T-cell (primary cell): ENCODE measurements at regions of chr2 and their contacts with region 1.

Region 1: DNA sequence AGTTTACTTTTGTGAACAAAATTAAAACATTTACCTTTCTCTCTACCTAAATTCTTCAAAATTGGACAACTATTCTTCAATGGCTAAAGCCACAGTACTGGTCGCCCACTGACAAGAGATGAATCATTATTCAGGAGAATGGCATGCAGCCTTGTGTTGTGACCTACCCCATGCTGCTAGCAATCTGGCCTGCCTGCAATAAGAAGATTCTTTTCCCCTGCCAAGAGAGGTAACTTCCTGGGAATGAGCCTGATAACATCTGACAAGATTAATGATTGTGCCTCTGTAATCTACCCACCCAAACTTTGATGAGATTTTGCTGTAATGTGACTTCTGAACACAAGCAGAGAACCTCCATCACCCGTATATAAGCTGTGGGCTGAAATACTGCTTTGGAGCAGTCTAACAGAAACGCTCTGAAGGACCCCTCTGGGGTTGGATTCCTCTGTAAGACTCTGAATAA is 47.0 kb upstream of the ST3GAL5 start:
- DNase-seq: no peak
- ATAC-seq: no peak
- H3K4me3 ChIP-seq: no peak overlapping the region
- H3K4me3 Mint-ChIP-seq: no peak overlapping the region
- H3K27ac ChIP-seq: no peak overlapping the region
- H3K27ac Mint-ChIP-seq: no peak overlapping the region
- H3K4me1 ChIP-seq: peaks cover 7 to 8% of the 10 kb centered on the region in 2 experiments
- H3K4me1 Mint-ChIP-seq: peaks cover 18 to 19% (median 19%) of the 10 kb centered on the region in 3 donors
- H3K27me3 ChIP-seq: no peaks in the 10 kb centered on the region
- H3K27me3 Mint-ChIP-seq: no peaks in the 10 kb centered on the region

Region 2: GRCh38 chr2:85838181-85838580 is 97.6 kb before region 1 on chr2:
- CTCF ChIA-PET with region 1: no interaction called
- POLR2A ChIA-PET with region 1: interaction called in 1 of 2 experiments, 11 read pairs
- DNase-seq: no peak
- ATAC-seq: no peak
- H3K4me3 ChIP-seq: no peak overlapping the region
- H3K4me3 Mint-ChIP-seq: peak overlapping the region in 1 of 3 donors; percentile 7
- H3K27ac ChIP-seq: no peak overlapping the region
- H3K27ac Mint-ChIP-seq: peak overlapping the region; percentile 40 to 63
- H3K4me1 ChIP-seq: peaks cover 0 to 7% of the 10 kb centered on the region in 2 experiments
- H3K4me1 Mint-ChIP-seq: peaks cover 19 to 22% (median 22%) of the 10 kb centered on the region in 3 donors
- H3K27me3 ChIP-seq: no peaks in the 10 kb centered on the region
- H3K27me3 Mint-ChIP-seq: no peaks in the 10 kb centered on the region

Region 3: GRCh38 chr2:85878719-85879385 is 56.9 kb before region 1 on chr2:
- CTCF ChIA-PET with region 1: no interaction called
- POLR2A ChIA-PET with region 1: no interaction called
- DNase-seq: no peak
- ATAC-seq: peak in 2 of 4 experiments; percentile 51 to 64
- H3K4me3 ChIP-seq: no peak overlapping the region
- H3K4me3 Mint-ChIP-seq: peak overlapping the region in 1 of 3 donors; percentile 64
- H3K27ac ChIP-seq: no peak overlapping the region
- H3K27ac Mint-ChIP-seq: peak overlapping the region; percentile 70 to 75
- H3K4me1 ChIP-seq: peaks cover 19 to 34% of the 10 kb centered on the region in 2 experiments
- H3K4me1 Mint-ChIP-seq: peaks cover 73 to 81% (median 74%) of the 10 kb centered on the region in 3 donors
- H3K27me3 ChIP-seq: no peaks in the 10 kb centered on the region
- H3K27me3 Mint-ChIP-seq: no peaks in the 10 kb centered on the region

Region 4: GRCh38 chr2:85920810-85921545 is 14.8 kb before region 1 on chr2:
- CTCF ChIA-PET with region 1: no interaction called
- POLR2A ChIA-PET with region 1: no interaction called
- DNase-seq: no peak
- ATAC-seq: no peak
- H3K4me3 ChIP-seq: no peak overlapping the region
- H3K4me3 Mint-ChIP-seq: no peak overlapping the region
- H3K27ac ChIP-seq: no peak overlapping the region
- H3K27ac Mint-ChIP-seq: no peak overlapping the region
- H3K4me1 ChIP-seq: no peaks in the 10 kb centered on the region
- H3K4me1 Mint-ChIP-seq: peaks cover 6 to 8% (median 7%) of the 10 kb centered on the region in 3 donors
- H3K27me3 ChIP-seq: peaks cover 0 to 2% of the 10 kb centered on the region in 2 experiments
- H3K27me3 Mint-ChIP-seq: peaks cover 0 to 3% of the 10 kb centered on the region in 2 donors